ENCODE measurements at regions of chr3 and their contacts with region 1.

Region 1: GRCh38 chr3:108477511-108478147 is 32.8 kb downstream of the MYH15 start:
- DNase-seq: no peak
- ATAC-seq: no peak

Region 2: GRCh38 chr3:108221911-108222852 is 255.4 kb before region 1 on chr3 and contains the start of gene IFT57:
- intact Hi-C with region 1: loop called (anchors 10 kb)
- DNase-seq: peak; percentile 95
- ATAC-seq: peak; percentile 100
- total RNA-seq, gene IFT57: 27.6 TPM

Measured in Right ventricle myocardium inferior (tissue), 1 donor.